GM13976 (cell line): ENCODE measurements at regions of chr16 and their contacts with region 1.

Region 1: GRCh38 chr16:16150117-16150877 is 73.0 kb downstream of the ABCC6 start:
- DNase-seq: no peak
- CTCF ChIP-seq: no peak

Region 2: GRCh38 chr16:15539197-15539596 is 611.1 kb before region 1 on chr16:
- in situ Hi-C with region 1: loop called (anchors 25 kb)
- DNase-seq: no peak
- CTCF ChIP-seq: no peak

Region 3: DNA sequence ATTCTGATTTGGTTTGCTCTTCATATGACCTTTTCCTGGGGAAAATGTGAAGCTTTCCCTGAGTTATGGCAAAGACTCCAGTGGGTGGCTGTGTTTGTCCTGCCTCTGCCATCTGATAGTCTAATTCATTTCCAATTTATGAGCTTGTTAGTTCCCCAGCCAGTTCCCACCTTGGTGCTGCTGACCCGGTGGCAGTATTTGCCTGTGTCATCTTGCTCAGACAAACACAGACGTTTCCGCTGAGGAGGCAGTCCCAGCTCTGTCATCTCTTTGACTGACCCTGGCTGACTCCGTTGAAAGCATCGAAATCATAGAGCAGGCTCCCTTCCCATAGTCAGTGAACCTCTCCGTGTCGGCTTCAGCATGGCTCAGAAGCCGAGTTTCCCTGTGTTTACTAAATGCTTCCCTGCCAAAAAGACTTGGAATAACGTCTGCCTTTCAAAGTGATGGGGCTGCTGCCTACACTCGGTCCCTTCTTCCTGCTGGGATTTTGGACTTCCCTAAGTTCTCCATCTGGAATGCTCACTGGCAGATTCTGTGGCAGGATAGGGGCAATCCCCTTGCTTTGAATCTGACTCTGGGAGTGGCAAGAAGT is 767.0 kb after region 1 on chr16:
- in situ Hi-C with region 1: loop called (anchors 25 kb)
- DNase-seq: no peak
- CTCF ChIP-seq: no peak